ENCODE measurements at regions of chr14 and their contacts with region 1.

Region 1: GRCh38 chr14:75577729-75578101 is 705 bp upstream of the FLVCR2 start:
- DNase-seq: peak; percentile 46 to 85 (median 67)
- ATAC-seq: peak; percentile 85
- H3K4me3 ChIP-seq: peak overlapping the region; percentile 81
- H3K4me3 Mint-ChIP-seq: peak overlapping the region; percentile 92
- H3K27ac ChIP-seq: no peak overlapping the region
- H3K27ac Mint-ChIP-seq: peak overlapping the region; percentile 64
- H3K4me1 ChIP-seq: peaks cover 28% of the 10 kb centered on the region
- H3K4me1 Mint-ChIP-seq: peaks cover 25% of the 10 kb centered on the region
- H3K27me3 ChIP-seq: no peaks in the 10 kb centered on the region
- H3K27me3 Mint-ChIP-seq: no peaks in the 10 kb centered on the region
- CTCF ChIP-seq: peak; percentile 83

Region 2: DNA sequence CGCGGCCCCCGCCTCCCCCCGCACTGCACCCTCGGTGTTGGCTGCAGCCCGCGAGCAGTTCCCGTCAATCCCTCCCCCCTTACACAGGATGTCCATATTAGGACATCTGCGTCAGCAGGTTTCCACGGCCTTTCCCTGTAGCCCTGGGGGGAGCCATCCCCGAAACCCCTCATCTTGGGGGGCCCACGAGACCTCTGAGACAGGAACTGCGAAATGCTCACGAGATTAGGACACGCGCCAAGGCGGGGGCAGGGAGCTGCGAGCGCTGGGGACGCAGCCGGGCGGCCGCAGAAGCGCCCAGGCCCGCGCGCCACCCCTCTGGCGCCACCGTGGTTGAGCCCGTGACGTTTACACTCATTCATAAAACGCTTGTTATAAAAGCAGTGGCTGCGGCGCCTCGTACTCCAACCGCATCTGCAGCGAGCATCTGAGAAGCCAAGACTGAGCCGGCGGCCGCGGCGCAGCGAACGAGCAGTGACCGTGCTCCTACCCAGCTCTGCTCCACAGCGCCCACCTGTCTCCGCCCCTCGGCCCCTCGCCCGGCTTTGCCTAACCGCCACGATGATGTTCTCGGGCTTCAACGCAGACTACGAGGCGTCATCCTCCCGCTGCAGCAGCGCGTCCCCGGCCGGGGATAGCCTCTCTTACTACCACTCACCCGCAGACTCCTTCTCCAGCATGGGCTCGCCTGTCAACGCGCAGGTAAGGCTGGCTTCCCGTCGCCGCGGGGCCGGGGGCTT is 299.1 kb before region 1 on chr14 and contains the start of gene FOS:
- CTCF ChIA-PET with region 1: no interaction called
- POLR2A ChIA-PET with region 1: no interaction called
- intact Hi-C with region 1: no loop called
- DNase-seq: peak; percentile 79 to 97 (median 86)
- ATAC-seq: peak; percentile 66
- H3K4me3 ChIP-seq: peak within 1 kb of the TSS; percentile 88
- H3K4me3 Mint-ChIP-seq: peak within 1 kb of the TSS; percentile 94
- H3K27ac ChIP-seq: peak within 1 kb of the TSS; percentile 69 to 82
- H3K27ac Mint-ChIP-seq: peak within 1 kb of the TSS; percentile 92
- H3K4me1 ChIP-seq: peaks cover 71% of the 10 kb centered on the region
- H3K4me1 Mint-ChIP-seq: peaks cover 56% of the 10 kb centered on the region
- H3K27me3 ChIP-seq: peaks cover 4% of the 10 kb centered on the region in 2 experiments
- H3K27me3 Mint-ChIP-seq: peaks cover 73% of the 10 kb centered on the region
- CTCF ChIP-seq: no peak
- total RNA-seq, gene FOS: 1,565 to 1,685 TPM

Region 3: GRCh38 chr14:75566321-75566720 is 11.4 kb before region 1 on chr14:
- CTCF ChIA-PET with region 1: interaction called, 11 read pairs
- POLR2A ChIA-PET with region 1: interaction called, 4 read pairs
- intact Hi-C with region 1: no loop called
- DNase-seq: peak; percentile 43 to 90 (median 68)
- ATAC-seq: peak; percentile 98
- H3K4me3 ChIP-seq: no peak overlapping the region
- H3K4me3 Mint-ChIP-seq: peak overlapping the region; percentile 26
- H3K27ac ChIP-seq: no peak overlapping the region
- H3K27ac Mint-ChIP-seq: peak overlapping the region; percentile 88
- H3K4me1 ChIP-seq: peaks cover 27% of the 10 kb centered on the region
- H3K4me1 Mint-ChIP-seq: peaks cover 33% of the 10 kb centered on the region
- H3K27me3 ChIP-seq: no peaks in the 10 kb centered on the region
- H3K27me3 Mint-ChIP-seq: no peaks in the 10 kb centered on the region
- CTCF ChIP-seq: no peak

Region 4: DNA sequence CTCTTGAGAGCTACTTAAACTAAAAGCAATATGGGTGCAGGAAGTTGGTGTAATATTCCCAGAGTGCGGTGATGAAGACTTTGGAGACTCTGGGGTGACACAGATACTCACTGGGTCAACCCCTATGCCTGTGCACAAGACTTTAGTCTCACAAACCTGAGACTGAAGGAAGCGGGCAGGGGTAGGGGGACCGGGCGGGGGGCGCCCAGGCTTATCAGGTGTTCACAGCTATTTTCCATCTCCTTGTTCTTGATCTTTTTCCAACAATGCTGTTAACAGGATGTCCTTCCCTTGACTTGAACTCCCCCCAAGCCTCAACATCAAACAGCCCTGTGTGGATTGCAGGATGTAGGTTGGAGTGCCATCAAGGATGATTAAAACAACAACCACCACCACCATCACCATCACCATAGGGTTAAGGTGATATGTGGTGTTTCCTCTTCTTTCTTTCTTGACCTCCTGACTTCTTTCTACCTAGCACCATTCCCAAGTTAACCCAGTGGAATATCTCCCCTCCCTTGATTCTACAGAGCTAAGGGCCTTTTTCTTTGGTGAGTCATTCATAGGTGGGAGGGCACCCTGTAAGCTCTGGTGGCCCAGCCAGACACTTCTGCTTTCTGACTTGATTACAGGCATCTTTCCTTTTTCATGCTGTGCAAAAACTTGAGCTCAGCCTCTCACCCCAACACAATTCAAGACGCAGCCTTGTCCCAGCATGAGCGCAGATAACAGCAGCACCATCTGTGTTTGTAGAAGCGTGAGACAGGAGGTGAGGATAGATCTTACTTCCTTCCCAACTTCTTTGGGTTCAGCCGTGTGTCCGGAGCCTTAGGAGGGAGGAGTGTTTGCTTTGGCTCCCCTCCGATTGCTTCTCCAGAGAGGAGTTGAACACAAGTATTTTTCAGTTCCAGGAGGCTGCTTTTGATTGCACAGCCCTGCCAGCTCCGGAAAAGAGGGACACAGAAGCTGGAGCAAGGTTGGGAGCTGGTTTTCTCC is 27.4 kb after region 1 on chr14:
- CTCF ChIA-PET with region 1: no interaction called
- POLR2A ChIA-PET with region 1: no interaction called
- intact Hi-C with region 1: no loop called
- DNase-seq: peak in 2 of 14 experiments; percentile 29 to 42
- ATAC-seq: no peak
- H3K4me3 ChIP-seq: no peak overlapping the region
- H3K4me3 Mint-ChIP-seq: no peak overlapping the region
- H3K27ac ChIP-seq: no peak overlapping the region
- H3K27ac Mint-ChIP-seq: no peak overlapping the region
- H3K4me1 ChIP-seq: no peaks in the 10 kb centered on the region
- H3K4me1 Mint-ChIP-seq: no peaks in the 10 kb centered on the region
- H3K27me3 ChIP-seq: no peaks in the 10 kb centered on the region
- H3K27me3 Mint-ChIP-seq: no peaks in the 10 kb centered on the region
- CTCF ChIP-seq: no peak